Activated T-helper 1 cell treated with anti-CD3 and anti-CD28 coated beads, Interleukin-12 subunit alpha, Interleukin-12 subunit beta, Interleukin-2, Interleukin-4 antibody, amounts not matched to agents 30 ng/mL and 10 ng/mL and 1 ng/mL, durations not matched to agents 14 hours and 24 hours and 36 hours (primary cell): ENCODE measurements at regions of chr6 and their contacts with region 1.

Region 1: DNA sequence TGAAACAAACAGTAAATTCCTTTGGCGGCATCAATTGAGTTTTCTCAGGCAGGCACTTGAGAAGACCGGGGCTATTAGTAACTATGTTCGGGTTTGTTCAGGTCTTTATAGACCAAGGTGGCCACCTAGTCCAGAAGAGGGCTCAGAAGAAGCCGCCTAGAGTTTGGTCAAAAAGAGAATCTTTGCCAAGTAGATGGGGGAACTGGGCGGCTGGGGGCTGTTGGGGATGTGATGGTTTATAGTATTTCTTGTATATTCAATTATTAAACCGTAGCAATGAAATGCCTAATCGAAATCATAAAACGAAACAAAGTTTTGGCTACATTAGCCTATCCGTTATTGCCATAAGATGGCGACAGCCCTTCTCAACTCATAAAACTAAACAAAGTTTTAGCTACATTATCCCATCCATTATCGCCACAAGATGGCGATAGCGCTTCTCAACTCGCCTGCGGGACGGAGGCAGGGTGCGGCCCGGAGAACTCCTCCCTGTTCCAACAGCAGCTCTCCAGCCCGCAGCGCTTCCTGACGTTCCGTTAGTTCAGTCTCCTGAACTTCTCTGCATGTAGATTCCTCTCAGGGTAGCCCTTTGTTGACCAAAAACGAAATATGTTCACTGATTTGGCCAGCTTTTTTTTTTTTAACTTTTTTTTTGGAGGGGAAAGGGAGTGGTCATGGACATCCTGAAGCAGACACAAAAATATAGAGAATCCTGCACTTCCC is 120.5 kb upstream of the PRSS16 start:
- DNase-seq: peak; percentile 83
- H3K4me3 Mint-ChIP-seq: peak overlapping the region; percentile 88
- H3K27ac Mint-ChIP-seq: peak overlapping the region; percentile 90
- H3K4me1 Mint-ChIP-seq: peaks cover 37% of the 10 kb centered on the region
- H3K27me3 Mint-ChIP-seq: no peaks in the 10 kb centered on the region

Region 2: DNA sequence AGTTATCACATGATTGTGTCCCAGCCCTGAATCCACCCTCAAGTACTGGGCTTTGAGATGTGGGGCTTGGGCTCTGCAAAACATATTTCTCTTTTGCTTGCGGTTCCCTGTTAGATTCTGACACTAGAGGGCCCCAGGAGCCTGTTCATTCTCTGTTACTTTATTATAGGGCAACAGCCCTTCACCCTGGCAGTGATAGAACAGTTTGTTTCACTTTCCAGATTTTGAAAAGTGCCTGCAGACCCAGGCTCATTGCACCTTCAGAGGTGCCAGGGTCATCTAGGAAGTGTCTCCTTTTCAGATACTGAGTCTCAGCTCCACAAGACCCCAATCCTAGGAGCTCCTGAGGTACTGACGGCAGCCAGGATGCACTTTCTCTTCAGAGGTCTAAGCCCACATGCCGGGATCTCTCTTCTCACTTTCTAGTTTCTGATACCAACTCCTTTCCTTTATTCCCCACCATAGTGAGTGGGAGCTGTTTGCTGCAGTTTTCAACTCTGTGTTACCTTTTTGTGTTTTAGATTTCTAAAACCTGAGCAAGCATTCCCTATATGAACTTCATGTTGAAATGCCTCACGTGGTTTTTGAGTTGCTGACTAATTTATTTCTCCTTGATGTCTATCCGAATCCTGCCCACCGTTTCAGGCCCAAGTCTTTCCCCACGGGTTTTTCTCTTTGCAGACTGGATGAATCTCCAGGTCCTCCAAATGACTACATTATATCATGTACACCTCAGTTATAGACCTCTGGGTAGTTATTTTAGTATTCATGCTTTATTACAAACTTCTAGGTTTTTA is 519.3 kb before region 1 on chr6:
- intact Hi-C with region 1: loop called (anchors 1 kb)
- DNase-seq: peak; percentile 58
- H3K4me3 Mint-ChIP-seq: peak overlapping the region; percentile 56
- H3K27ac Mint-ChIP-seq: no peak overlapping the region
- H3K4me1 Mint-ChIP-seq: peaks cover 20% of the 10 kb centered on the region
- H3K27me3 Mint-ChIP-seq: peaks cover 16% of the 10 kb centered on the region

Region 3: GRCh38 chr6:27177485-27178406 is 50.8 kb after region 1 on chr6:
- intact Hi-C with region 1: loop called (anchors 1 kb)
- DNase-seq: peak; percentile 66
- H3K4me3 Mint-ChIP-seq: peak overlapping the region; percentile 95
- H3K27ac Mint-ChIP-seq: peak overlapping the region; percentile 93
- H3K4me1 Mint-ChIP-seq: peaks cover 7% of the 10 kb centered on the region
- H3K27me3 Mint-ChIP-seq: peaks cover 36% of the 10 kb centered on the region

Region 4: DNA sequence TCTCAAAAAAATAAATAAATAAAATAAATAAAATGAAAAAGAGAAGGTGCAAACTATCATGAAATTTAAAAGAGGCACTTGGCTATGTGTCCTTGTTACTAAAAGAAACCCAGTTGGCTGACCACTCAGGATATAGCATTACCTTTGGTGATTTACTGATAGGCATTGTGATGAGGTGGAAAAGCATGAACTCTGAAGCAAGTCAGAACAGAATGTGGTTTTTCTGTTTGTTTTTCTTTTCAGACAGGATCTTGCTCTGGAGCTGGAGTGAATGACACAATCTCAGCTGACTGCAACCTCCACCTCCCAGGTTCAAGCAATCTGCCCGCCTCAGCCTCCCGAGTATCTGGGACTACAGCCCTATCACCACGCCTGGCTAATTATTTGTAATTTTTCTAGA is 314.0 kb after region 1 on chr6:
- intact Hi-C with region 1: no loop called
- DNase-seq: no peak
- H3K4me3 Mint-ChIP-seq: no peak overlapping the region
- H3K27ac Mint-ChIP-seq: no peak overlapping the region
- H3K4me1 Mint-ChIP-seq: no peaks in the 10 kb centered on the region
- H3K27me3 Mint-ChIP-seq: no peaks in the 10 kb centered on the region

Region 5: GRCh38 chr6:27795697-27796494 is 668.9 kb after region 1 on chr6:
- intact Hi-C with region 1: loop called (anchors 1 kb)
- DNase-seq: peak; percentile 58
- H3K4me3 Mint-ChIP-seq: no peak overlapping the region
- H3K27ac Mint-ChIP-seq: peak overlapping the region; percentile 65
- H3K4me1 Mint-ChIP-seq: peaks cover 42% of the 10 kb centered on the region
- H3K27me3 Mint-ChIP-seq: peaks cover 12% of the 10 kb centered on the region

Region 6: GRCh38 chr6:29071831-29072723 is 1945.1 kb after region 1 on chr6:
- intact Hi-C with region 1: no loop called
- DNase-seq: no peak
- H3K4me3 Mint-ChIP-seq: no peak overlapping the region
- H3K27ac Mint-ChIP-seq: no peak overlapping the region
- H3K4me1 Mint-ChIP-seq: no peaks in the 10 kb centered on the region
- H3K27me3 Mint-ChIP-seq: peaks cover 6% of the 10 kb centered on the region